ENCODE measurements at regions of chr4 and their contacts with region 1.

Region 1: GRCh38 chr4:145180298-145181090 is at the start of gene OTUD4:
- DNase-seq: peak; percentile 94
- ATAC-seq: peak; percentile 88
- H3K4me3 ChIP-seq: peak within 1 kb of the TSS; percentile 77
- H3K27ac ChIP-seq: peak within 1 kb of the TSS; percentile 88
- H3K4me1 ChIP-seq: no peaks in the 10 kb centered on the region; the same call in 1 of the 2 replicates
- H3K27me3 ChIP-seq: no peaks in the 10 kb centered on the region
- CTCF ChIP-seq: peak; percentile 22; the same call in 1 of the 2 replicates
- POLR2A ChIP-seq: no peak
- RAD21 ChIP-seq: no peak
- total RNA-seq, gene OTUD4: 12.4 and 16.9 TPM in 2 replicates

Region 2: GRCh38 chr4:145170223-145170622 is 10.3 kb before region 1 on chr4:
- CTCF ChIA-PET with region 1: no interaction called
- POLR2A ChIA-PET with region 1: no interaction called
- dilution Hi-C with region 1: no loop called
- in situ Hi-C with region 1: no loop called
- intact Hi-C with region 1: loop called (anchors 1 kb)
- DNase-seq: peak; percentile 11
- ATAC-seq: peak; percentile 70
- H3K4me3 ChIP-seq: no peak overlapping the region
- H3K27ac ChIP-seq: no peak overlapping the region
- H3K4me1 ChIP-seq: peaks cover 6% of the 10 kb centered on the region
- H3K27me3 ChIP-seq: no peaks in the 10 kb centered on the region
- CTCF ChIP-seq: no peak
- POLR2A ChIP-seq: no peak
- RAD21 ChIP-seq: no peak

Region 3: DNA sequence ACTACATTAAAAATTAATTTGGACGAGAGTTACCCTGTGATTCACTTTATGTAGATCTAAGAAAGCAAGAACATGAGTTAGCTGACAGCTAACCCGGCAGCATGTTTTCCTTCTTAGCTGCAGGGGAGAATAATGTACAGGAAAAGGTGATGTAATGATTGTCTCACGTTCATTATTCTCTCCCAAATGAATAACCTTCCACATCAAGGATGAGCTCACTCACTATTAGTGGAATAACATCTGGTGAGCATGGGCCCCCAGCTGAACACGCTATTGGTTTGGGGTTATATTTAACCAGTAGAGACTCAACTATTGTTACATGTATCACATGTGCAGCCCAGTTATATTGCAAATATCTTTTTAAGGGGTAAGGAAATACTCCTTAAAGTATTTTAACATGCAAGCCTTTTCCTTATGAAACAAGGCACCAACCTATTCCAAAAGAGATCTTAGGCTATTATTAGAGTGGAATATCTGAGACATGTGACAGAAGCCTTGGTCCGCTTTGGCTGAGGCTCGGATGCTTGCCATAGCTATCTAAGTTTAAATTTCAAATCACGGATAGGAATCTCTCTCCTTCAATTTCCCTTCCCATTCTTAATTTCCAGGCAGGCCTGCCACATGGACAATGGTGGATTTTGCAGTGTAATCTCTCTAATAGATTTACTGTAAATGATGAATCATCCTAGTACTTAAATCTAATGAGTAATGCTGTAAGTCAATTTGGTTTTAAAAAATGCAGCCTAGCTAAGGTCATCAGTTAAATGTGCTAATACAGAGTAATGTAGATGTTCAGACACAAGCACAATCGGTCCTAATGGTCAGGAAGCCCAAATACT is 98.8 kb after region 1 on chr4:
- CTCF ChIA-PET with region 1: no interaction called
- POLR2A ChIA-PET with region 1: no interaction called
- dilution Hi-C with region 1: no loop called
- in situ Hi-C with region 1: no loop called
- intact Hi-C with region 1: loop called (anchors 2 kb)
- DNase-seq: peak; percentile 81
- ATAC-seq: peak; percentile 69
- H3K4me3 ChIP-seq: no peak overlapping the region
- H3K27ac ChIP-seq: peak overlapping the region; percentile 75; the same call in 1 of the 2 replicates
- H3K4me1 ChIP-seq: peaks cover 11% of the 10 kb centered on the region
- H3K27me3 ChIP-seq: no peaks in the 10 kb centered on the region
- CTCF ChIP-seq: no peak
- POLR2A ChIP-seq: no peak
- RAD21 ChIP-seq: no peak

Region 4: DNA sequence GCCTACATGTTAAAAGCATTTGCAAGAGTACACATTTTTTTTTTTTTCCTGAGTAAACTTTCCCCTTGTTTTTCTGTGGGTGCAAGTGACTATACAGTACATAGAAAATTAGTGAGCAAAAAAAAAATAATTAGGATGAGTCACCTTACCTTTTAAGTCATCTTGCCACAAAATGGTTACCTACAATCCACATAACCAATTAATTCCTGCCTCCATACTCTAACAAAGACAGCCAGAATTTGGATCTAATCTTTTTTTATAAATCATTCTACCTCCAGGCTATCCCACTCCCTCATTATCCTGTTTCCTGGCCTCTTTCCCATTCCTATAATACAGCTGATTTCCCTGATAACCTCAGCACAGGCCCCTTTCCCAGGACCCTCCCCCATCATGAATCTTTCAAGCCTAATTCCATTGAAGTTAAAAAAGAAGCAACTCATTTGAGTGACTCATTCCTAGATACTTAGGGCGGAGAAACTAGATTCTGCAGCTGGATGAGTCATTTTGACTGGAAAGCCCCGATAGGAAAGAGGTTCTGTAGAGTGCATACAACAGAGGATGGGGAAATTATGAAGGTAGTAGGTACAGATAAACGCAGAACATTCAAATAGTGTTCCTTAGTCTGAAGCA is 627.6 kb after region 1 on chr4:
- CTCF ChIA-PET with region 1: no interaction called
- POLR2A ChIA-PET with region 1: no interaction called
- dilution Hi-C with region 1: no loop called
- in situ Hi-C with region 1: no loop called
- intact Hi-C with region 1: loop called (anchors 10 kb)
- DNase-seq: peak; percentile 98
- ATAC-seq: peak; percentile 79
- H3K4me3 ChIP-seq: no peak overlapping the region
- H3K27ac ChIP-seq: peak overlapping the region; percentile 85
- H3K4me1 ChIP-seq: peaks cover 8% of the 10 kb centered on the region
- H3K27me3 ChIP-seq: no peaks in the 10 kb centered on the region
- CTCF ChIP-seq: no peak
- POLR2A ChIP-seq: no peak
- RAD21 ChIP-seq: no peak